ENCODE measurements at regions of chr3 and their contacts with region 1.

Region 1: GRCh38 chr3:12405432-12406272 is 78.6 kb upstream of the TSEN2 start:
- DNase-seq: peak; percentile 92 to 97
- H3K4me3 ChIP-seq: peak overlapping the region; percentile 20; the same call in 1 of the 2 replicates
- H3K27ac ChIP-seq: peak overlapping the region; percentile 96
- H3K4me1 ChIP-seq: peaks cover 51% of the 10 kb centered on the region
- H3K27me3 ChIP-seq: no peaks in the 10 kb centered on the region
- CTCF ChIP-seq: no peak

Region 2: GRCh38 chr3:12224181-12225147 is 181.2 kb before region 1 on chr3:
- CTCF ChIA-PET with region 1: no interaction called
- POLR2A ChIA-PET with region 1: no interaction called
- intact Hi-C with region 1: loop called (anchors 5 kb)
- DNase-seq: no peak
- H3K4me3 ChIP-seq: no peak overlapping the region
- H3K27ac ChIP-seq: 0 out of 2 replicates have a peak overlapping the region, but pooled peaks have one; percentile 77
- H3K4me1 ChIP-seq: peaks cover 46% of the 10 kb centered on the region
- H3K27me3 ChIP-seq: no peaks in the 10 kb centered on the region
- CTCF ChIP-seq: no peak

Region 3: GRCh38 chr3:12287727-12288191 is 117.9 kb before region 1 on chr3:
- CTCF ChIA-PET with region 1: no interaction called
- POLR2A ChIA-PET with region 1: no interaction called
- intact Hi-C with region 1: loop called (anchors 1 kb)
- DNase-seq: peak in 1 of 2 experiments; percentile 54
- H3K4me3 ChIP-seq: peak overlapping the region; percentile 85
- H3K27ac ChIP-seq: peak overlapping the region; percentile 91
- H3K4me1 ChIP-seq: peaks cover 26% of the 10 kb centered on the region
- H3K27me3 ChIP-seq: no peaks in the 10 kb centered on the region
- CTCF ChIP-seq: no peak

Region 4: DNA sequence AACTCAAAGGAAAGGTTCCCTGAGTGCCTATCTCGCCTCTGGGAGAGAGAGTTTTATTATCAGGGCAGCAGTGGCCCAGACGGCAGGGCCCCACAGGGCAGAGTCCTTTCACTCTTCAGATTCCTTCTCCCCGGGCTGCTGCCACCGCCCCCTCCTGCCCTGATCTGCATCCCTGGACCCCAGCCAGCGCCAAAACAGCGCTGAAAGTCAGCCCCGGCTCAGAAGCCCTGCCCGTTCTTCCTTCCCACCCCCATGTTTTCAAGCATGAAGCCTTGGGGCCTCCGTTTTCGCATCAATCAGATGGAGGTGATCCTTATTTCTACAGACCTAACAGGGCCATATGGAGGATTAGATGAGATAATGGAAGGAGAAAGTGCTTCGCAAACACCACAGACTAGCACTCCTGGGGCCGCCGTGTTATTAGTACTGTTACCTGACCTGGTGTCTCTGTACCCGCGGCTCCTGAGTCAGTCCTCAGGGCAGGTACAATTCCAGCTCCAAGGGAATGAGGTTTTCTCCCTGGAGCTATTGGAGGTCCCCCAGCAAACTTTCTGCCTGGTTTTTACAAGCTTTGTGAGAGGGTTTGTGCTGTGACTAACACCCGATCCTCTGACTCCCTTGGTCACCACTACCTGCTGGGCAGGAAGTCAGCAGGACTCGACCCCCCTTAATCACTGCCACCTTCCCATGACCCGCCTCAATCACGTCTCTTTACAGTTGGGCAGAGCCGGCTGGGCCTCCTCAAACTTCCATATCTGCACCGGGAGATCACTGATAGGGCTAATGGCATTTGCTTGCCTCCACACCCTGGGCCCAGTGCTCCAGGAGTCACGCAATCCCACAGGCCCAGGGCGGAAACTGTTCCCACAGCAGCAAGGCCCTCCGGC is 39.2 kb after region 1 on chr3:
- CTCF ChIA-PET with region 1: no interaction called
- POLR2A ChIA-PET with region 1: no interaction called
- intact Hi-C with region 1: loop called (anchors 1 kb)
- DNase-seq: peak; percentile 92 to 99
- H3K4me3 ChIP-seq: peak overlapping the region; percentile 47
- H3K27ac ChIP-seq: peak overlapping the region; percentile 100
- H3K4me1 ChIP-seq: peaks cover 76% of the 10 kb centered on the region
- H3K27me3 ChIP-seq: no peaks in the 10 kb centered on the region
- CTCF ChIP-seq: no peak

Region 5: DNA sequence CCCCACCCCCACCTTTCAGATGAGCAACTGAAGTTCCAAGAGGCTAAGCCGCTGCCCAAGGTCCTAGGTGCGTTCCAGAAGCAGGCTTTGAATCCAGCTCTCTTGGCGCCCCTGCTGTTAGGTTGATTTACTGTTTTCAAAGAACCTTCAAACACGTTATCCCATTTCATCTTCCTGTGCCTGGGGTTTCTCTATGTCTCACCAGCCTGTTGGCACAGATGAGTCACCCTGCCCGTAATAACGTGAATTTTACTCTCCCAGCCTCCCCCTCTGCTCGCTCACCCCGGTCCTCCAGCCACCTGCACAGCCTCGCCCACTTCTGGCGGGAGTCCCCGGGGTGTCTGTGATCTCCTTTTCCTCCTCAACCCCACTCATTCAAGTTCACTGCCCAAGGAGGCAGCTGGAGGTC is 65.6 kb after region 1 on chr3:
- CTCF ChIA-PET with region 1: interaction called, 3 read pairs
- POLR2A ChIA-PET with region 1: no interaction called
- intact Hi-C with region 1: loop called (anchors 2 kb)
- DNase-seq: peak; percentile 76 to 92
- H3K4me3 ChIP-seq: no peak overlapping the region
- H3K27ac ChIP-seq: peak overlapping the region; percentile 92
- H3K4me1 ChIP-seq: peaks cover 66% of the 10 kb centered on the region
- H3K27me3 ChIP-seq: no peaks in the 10 kb centered on the region
- CTCF ChIP-seq: peak; percentile 64

Measured in PC-9 (cell line).